MCF 10A (cell line): ENCODE measurements at regions of chr11 and their contacts with region 1.

Region 1: DNA sequence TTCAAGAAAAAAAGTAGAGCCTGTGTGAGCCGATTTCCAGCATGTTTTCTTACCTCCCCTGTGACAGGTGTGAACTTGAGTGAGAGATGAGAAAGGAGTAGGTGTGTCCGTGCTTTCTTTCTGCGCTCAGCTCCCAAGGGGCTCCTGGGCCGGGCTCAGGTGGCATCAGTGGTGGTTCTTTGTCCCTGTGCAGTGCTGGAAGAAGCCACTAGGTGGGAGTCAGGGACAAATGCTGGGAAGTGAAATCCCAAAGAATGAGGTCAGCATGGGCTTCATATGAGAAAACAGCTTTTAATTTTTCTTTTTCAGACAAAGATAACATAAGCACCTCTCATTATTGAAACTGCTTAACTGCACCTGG is 57.8 kb downstream of the PPFIBP2 start:
- DNase-seq: peak; percentile 83
- H3K4me3 Mint-ChIP-seq: no peak overlapping the region
- H3K27ac Mint-ChIP-seq: no peak overlapping the region
- H3K4me1 Mint-ChIP-seq: peaks cover 16% of the 10 kb centered on the region
- H3K27me3 Mint-ChIP-seq: no peaks in the 10 kb centered on the region
- CTCF ChIP-seq: peak; percentile 91

Region 2: DNA sequence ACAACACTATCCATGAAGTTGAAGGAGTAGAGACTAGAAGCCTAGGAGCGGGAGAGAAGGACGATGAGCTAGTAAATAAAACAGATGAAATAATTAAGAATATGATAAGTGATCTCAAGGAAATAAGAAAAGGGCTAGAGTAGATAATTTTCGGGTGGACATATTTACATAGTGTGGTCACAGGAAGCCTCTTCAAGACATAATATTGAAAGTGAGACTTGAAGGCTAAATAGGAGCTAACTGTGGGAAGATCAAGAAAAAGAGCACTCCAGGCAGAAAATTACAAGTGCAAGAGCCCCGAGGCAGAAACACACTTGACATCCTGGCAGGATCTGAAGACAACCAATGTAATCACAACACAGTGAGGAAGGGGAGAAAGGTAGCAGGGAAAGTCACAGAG is 69.7 kb before region 1 on chr11:
- CTCF ChIA-PET with region 1: interaction called, 11 read pairs
- POLR2A ChIA-PET with region 1: no interaction called
- intact Hi-C with region 1: no loop called
- DNase-seq: no peak
- H3K4me3 Mint-ChIP-seq: no peak overlapping the region
- H3K27ac Mint-ChIP-seq: no peak overlapping the region
- H3K4me1 Mint-ChIP-seq: no peaks in the 10 kb centered on the region
- H3K27me3 Mint-ChIP-seq: peaks cover 8% of the 10 kb centered on the region
- CTCF ChIP-seq: no peak

Region 3: DNA sequence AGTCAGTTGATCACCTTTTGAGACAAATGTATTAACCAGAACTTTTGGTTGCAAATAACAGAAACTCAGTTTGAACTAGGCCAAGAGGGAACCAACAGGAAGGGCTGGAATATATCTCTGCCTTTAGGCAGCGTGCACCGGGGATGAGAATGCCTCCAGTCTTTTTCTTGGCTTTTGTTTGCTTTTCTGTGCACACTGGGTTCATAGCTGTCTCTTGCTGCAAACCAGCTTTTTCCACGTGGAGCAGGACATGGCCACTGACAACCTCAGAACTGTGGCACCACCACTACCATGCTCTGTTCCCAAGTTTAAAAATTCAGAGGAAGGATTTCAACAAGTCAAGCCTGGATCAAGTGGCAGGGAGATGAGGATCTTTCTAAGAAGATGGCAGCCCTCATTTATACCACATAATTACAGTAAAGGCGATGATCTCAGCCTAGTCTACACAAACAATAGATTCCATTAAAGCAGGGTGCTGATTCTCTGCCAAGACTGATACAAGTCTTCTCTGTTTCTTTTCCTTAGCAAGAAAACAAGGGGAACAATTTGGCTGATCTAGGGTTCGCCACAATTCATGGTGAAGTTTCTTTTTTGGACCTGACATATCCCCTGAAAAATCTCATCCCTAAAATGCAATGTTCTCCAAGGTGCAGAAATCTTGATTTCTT is 16.0 kb after region 1 on chr11:
- CTCF ChIA-PET with region 1: interaction called, 32 read pairs
- POLR2A ChIA-PET with region 1: interaction called, 7 read pairs
- intact Hi-C with region 1: no loop called
- DNase-seq: no peak
- H3K4me3 Mint-ChIP-seq: no peak overlapping the region
- H3K27ac Mint-ChIP-seq: no peak overlapping the region
- H3K4me1 Mint-ChIP-seq: peaks cover 14% of the 10 kb centered on the region
- H3K27me3 Mint-ChIP-seq: no peaks in the 10 kb centered on the region
- CTCF ChIP-seq: no peak

Region 4: DNA sequence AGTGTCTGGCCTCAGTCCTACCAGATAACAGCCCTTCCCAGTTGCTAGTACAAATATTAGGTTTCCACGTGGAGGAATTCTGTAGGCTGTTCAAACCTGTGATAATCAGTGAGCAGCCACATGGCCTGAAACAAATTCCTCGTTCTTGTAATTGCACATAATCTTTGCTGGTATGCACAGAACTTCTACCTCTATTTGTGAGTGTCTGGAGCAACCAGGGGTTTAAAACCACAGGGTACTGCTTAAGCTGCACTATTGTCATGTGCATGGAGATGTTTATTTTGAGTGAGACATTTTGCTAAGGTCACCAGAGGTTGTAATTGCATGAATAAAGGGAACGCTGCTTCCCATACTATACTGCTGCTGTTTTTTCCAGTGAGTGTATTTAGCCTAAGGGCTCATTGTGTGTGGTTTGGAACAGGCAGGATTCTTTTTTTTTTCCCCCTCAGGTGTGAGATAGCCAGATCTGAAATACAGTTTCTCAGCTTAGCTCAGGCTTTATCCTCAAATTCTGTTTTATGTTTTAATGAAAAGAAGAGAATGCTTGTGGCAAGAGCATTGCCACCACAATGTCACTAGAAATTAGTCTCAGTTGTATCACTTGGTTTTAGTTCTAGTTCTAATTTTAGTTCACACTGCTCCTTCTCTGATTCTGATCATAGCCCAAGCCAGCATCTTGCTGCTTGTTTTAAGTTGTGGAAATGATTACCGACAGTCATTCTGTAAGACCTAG is 41.2 kb after region 1 on chr11:
- CTCF ChIA-PET with region 1: interaction called, 43 read pairs
- POLR2A ChIA-PET with region 1: interaction called, 5 read pairs
- intact Hi-C with region 1: no loop called
- DNase-seq: peak; percentile 34
- H3K4me3 Mint-ChIP-seq: no peak overlapping the region
- H3K27ac Mint-ChIP-seq: no peak overlapping the region
- H3K4me1 Mint-ChIP-seq: peaks cover 24% of the 10 kb centered on the region
- H3K27me3 Mint-ChIP-seq: no peaks in the 10 kb centered on the region
- CTCF ChIP-seq: no peak

Region 5: DNA sequence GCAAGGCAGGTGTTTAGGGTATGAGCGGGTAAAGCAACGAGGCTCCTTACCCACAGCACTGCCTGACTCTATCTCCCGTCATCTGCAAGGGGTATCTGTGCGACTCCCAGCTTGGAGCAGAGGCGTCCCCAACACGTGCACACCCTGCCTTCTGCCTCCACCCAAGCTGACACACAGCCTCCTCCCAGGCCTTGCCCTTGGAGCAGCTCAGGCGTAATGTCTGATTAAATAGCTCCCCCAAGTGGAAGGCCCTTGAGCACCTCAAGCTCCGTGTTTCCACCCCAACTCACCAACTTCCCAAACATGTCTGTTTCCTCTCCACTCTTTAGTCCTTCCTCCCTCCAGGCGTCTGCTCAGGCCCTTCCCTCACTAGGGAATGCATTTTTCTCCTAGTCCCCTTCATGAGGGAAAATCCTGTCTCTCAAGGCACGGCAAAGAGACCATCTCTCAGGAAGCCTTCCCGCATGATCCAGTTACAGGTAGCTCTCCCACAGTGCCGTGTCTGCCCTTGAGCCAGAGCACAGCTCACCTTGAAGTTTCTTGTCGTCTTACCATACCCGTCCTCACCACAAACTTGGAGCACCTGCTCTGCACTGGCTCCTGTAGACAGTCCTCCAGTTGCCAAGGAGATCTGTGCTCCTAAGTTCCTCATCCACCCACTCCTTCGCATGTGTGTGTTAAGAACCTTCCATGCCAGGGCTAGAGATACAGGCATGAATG is 85.8 kb after region 1 on chr11:
- CTCF ChIA-PET with region 1: interaction called, 488 read pairs
- POLR2A ChIA-PET with region 1: interaction called, 24 read pairs
- intact Hi-C with region 1: loop called (anchors 1 kb)
- DNase-seq: peak; percentile 80
- H3K4me3 Mint-ChIP-seq: no peak overlapping the region
- H3K27ac Mint-ChIP-seq: no peak overlapping the region
- H3K4me1 Mint-ChIP-seq: no peaks in the 10 kb centered on the region
- H3K27me3 Mint-ChIP-seq: no peaks in the 10 kb centered on the region
- CTCF ChIP-seq: peak; percentile 65

Region 6: DNA sequence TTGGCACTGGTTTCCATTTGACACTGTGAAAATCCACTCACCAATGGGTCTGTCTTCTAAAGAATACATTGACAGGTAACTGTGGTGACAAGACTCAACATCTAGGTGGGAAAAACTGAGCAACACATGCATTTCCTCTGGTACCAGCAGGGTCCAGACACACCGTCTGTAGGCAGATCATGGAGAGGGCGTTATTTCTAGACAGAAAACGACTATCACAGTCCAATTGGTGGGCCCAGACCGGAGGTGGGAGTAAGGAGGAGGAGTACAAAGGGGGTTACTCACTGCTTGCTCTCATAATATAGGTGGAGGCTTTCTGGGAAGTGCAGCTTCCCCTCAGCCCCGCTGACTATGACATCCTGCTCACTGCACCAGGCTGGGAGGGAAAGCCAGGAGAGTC is 124.8 kb after region 1 on chr11:
- CTCF ChIA-PET with region 1: interaction called, 33 read pairs
- POLR2A ChIA-PET with region 1: no interaction called
- intact Hi-C with region 1: no loop called
- DNase-seq: no peak
- H3K4me3 Mint-ChIP-seq: no peak overlapping the region
- H3K27ac Mint-ChIP-seq: no peak overlapping the region
- H3K4me1 Mint-ChIP-seq: peaks cover 5% of the 10 kb centered on the region
- H3K27me3 Mint-ChIP-seq: peaks cover 41% of the 10 kb centered on the region
- CTCF ChIP-seq: no peak